Activated CD4-positive, alpha-beta memory T cell treated with anti-CD3 and anti-CD28 coated beads, Interleukin-2, amount 10 ng/mL, durations not matched to agents 7 days and 5 days (primary cell): ENCODE measurements at regions of chr12 and their contacts with region 1.

Region 1: GRCh38 chr12:6423267-6424007 is 21.3 kb upstream of the CD27 start:
- DNase-seq: peak; percentile 85
- H3K4me3 Mint-ChIP-seq: no peak overlapping the region
- H3K27ac Mint-ChIP-seq: peak overlapping the region; percentile 54
- H3K4me1 Mint-ChIP-seq: peaks cover 45% of the 10 kb centered on the region
- H3K27me3 Mint-ChIP-seq: no peaks in the 10 kb centered on the region

Region 2: GRCh38 chr12:6335451-6336078 is 87.9 kb before region 1 on chr12:
- CTCF ChIA-PET with region 1: interaction called, 11 read pairs
- POLR2A ChIA-PET with region 1: interaction called, 4 read pairs
- DNase-seq: peak; percentile 90
- H3K4me3 Mint-ChIP-seq: no peak overlapping the region
- H3K27ac Mint-ChIP-seq: no peak overlapping the region
- H3K4me1 Mint-ChIP-seq: no peaks in the 10 kb centered on the region
- H3K27me3 Mint-ChIP-seq: no peaks in the 10 kb centered on the region

Region 3: GRCh38 chr12:6434205-6435140 is 11.0 kb after region 1 on chr12:
- CTCF ChIA-PET with region 1: interaction called, 11 read pairs
- POLR2A ChIA-PET with region 1: interaction called, 3 read pairs
- DNase-seq: peak; percentile 50
- H3K4me3 Mint-ChIP-seq: no peak overlapping the region
- H3K27ac Mint-ChIP-seq: peak overlapping the region; percentile 71
- H3K4me1 Mint-ChIP-seq: peaks cover 44% of the 10 kb centered on the region
- H3K27me3 Mint-ChIP-seq: no peaks in the 10 kb centered on the region

Region 4: GRCh38 chr12:6451348-6452244 is 28.2 kb after region 1 on chr12 and contains the start of gene TAPBPL:
- CTCF ChIA-PET with region 1: interaction called, 7 read pairs
- POLR2A ChIA-PET with region 1: interaction called, 66 read pairs
- DNase-seq: peak; percentile 83
- H3K4me3 Mint-ChIP-seq: peak within 1 kb of the TSS; percentile 99
- H3K27ac Mint-ChIP-seq: peak within 1 kb of the TSS; percentile 97
- H3K4me1 Mint-ChIP-seq: peaks cover 71% of the 10 kb centered on the region
- H3K27me3 Mint-ChIP-seq: no peaks in the 10 kb centered on the region
- total RNA-seq, gene TAPBPL: 45.0 to 49.0 TPM

Region 5: DNA sequence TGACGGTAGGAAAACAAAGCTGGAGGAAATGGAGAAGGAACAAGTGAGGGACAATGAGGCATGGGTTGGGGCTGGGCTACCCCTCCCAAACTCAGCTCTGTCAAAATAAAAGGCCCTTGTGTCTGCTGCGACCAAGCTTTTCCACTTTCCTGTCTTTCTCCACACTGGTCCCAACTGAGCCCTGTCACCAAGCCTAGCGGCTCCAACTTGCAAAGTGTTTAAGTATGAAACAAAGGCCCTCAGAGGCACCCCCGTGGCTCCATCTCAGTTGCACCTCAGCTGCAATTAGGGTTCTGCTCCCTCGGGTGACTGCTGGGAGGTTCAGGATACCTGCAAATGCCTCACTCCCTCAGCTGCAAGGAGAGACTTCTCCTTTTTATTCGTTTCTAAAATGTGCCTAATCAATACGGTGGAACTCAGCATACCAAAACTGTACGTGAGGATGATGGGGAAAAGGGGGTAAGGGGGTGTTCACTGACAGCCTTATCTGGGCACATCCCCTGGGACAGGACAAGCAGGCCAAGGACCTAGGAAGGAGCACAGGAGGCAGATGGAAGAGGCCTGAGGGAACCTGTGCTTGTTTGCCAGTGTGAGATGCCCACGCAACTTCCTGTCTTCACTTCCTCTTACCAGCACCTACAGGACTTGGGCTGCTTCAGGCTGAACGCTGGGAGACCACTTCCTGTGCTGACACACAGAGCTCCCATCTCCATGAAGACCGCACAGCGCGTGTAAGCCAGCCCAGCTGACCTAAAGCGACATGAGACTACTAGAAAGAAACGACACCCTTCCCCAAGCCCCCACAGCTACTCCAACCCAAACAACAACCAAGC is 38.2 kb after region 1 on chr12:
- CTCF ChIA-PET with region 1: interaction called, 95 read pairs
- POLR2A ChIA-PET with region 1: interaction called, 81 read pairs
- DNase-seq: peak; percentile 91
- H3K4me3 Mint-ChIP-seq: peak overlapping the region; percentile 74
- H3K27ac Mint-ChIP-seq: peak overlapping the region; percentile 98
- H3K4me1 Mint-ChIP-seq: peaks cover 84% of the 10 kb centered on the region
- H3K27me3 Mint-ChIP-seq: no peaks in the 10 kb centered on the region

Region 6: GRCh38 chr12:6493497-6494257 is 70.2 kb after region 1 on chr12 and contains the start of gene NCAPD2:
- CTCF ChIA-PET with region 1: interaction called, 4 read pairs
- POLR2A ChIA-PET with region 1: interaction called, 17 read pairs
- DNase-seq: peak; percentile 98
- H3K4me3 Mint-ChIP-seq: peak within 1 kb of the TSS; percentile 96
- H3K27ac Mint-ChIP-seq: peak within 1 kb of the TSS; percentile 98
- H3K4me1 Mint-ChIP-seq: peaks cover 44% of the 10 kb centered on the region
- H3K27me3 Mint-ChIP-seq: no peaks in the 10 kb centered on the region
- total RNA-seq, gene NCAPD2: 153 to 156 TPM

Region 7: GRCh38 chr12:6507102-6507998 is 83.9 kb after region 1 on chr12:
- CTCF ChIA-PET with region 1: no interaction called
- POLR2A ChIA-PET with region 1: no interaction called
- DNase-seq: no peak
- H3K4me3 Mint-ChIP-seq: no peak overlapping the region
- H3K27ac Mint-ChIP-seq: no peak overlapping the region
- H3K4me1 Mint-ChIP-seq: peaks cover 18% of the 10 kb centered on the region
- H3K27me3 Mint-ChIP-seq: no peaks in the 10 kb centered on the region

Region 8: GRCh38 chr12:6540181-6540877 is 116.9 kb after region 1 on chr12:
- CTCF ChIA-PET with region 1: interaction called, 45 read pairs
- POLR2A ChIA-PET with region 1: interaction called, 39 read pairs
- DNase-seq: peak; percentile 70
- H3K4me3 Mint-ChIP-seq: peak overlapping the region; percentile 51
- H3K27ac Mint-ChIP-seq: peak overlapping the region; percentile 88
- H3K4me1 Mint-ChIP-seq: peaks cover 66% of the 10 kb centered on the region
- H3K27me3 Mint-ChIP-seq: no peaks in the 10 kb centered on the region